Transverse colon (tissue), 4 donors: ENCODE measurements at regions of chr2 and their contacts with region 1.

Region 1: GRCh38 chr2:64348386-64349130 is 105.4 kb upstream of the LGALSL start:
- DNase-seq: no peak
- H3K4me3 ChIP-seq: no peak overlapping the region
- H3K27ac ChIP-seq: no peak overlapping the region
- H3K4me1 ChIP-seq: no peaks in the 10 kb centered on the region
- H3K27me3 ChIP-seq: no peaks in the 10 kb centered on the region
- CTCF ChIP-seq: no peak
- EP300 ChIP-seq: no peak
- POLR2A ChIP-seq: no peak

Region 2: DNA sequence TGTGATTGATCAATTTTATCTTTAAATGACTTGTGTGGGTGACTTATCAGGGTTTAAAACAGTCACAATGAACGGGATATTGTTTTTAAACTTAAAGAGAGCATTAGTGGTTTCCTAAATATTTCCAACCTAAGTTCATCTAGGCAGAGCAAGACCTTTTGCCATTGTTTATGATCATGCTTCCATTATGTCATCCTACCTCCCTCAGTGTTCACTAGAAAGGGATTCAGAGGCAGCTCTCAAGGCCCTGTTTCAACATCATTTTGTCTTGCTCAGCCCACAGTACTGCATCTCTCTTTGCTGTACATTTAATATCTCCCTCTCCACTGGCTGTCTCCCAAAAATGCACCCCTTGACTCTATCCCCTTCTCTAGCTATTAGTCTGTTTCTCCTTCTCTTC is 182.9 kb before region 1 on chr2:
- in situ Hi-C with region 1: no loop called
- intact Hi-C with region 1: no loop called
- DNase-seq: no peak
- H3K4me3 ChIP-seq: no peak overlapping the region
- H3K27ac ChIP-seq: no peak overlapping the region
- H3K4me1 ChIP-seq: peaks cover 0 to 2% (median 0%) of the 10 kb centered on the region in 4 donors
- H3K27me3 ChIP-seq: no peaks in the 10 kb centered on the region
- CTCF ChIP-seq: no peak
- EP300 ChIP-seq: no peak
- POLR2A ChIP-seq: no peak

Region 3: DNA sequence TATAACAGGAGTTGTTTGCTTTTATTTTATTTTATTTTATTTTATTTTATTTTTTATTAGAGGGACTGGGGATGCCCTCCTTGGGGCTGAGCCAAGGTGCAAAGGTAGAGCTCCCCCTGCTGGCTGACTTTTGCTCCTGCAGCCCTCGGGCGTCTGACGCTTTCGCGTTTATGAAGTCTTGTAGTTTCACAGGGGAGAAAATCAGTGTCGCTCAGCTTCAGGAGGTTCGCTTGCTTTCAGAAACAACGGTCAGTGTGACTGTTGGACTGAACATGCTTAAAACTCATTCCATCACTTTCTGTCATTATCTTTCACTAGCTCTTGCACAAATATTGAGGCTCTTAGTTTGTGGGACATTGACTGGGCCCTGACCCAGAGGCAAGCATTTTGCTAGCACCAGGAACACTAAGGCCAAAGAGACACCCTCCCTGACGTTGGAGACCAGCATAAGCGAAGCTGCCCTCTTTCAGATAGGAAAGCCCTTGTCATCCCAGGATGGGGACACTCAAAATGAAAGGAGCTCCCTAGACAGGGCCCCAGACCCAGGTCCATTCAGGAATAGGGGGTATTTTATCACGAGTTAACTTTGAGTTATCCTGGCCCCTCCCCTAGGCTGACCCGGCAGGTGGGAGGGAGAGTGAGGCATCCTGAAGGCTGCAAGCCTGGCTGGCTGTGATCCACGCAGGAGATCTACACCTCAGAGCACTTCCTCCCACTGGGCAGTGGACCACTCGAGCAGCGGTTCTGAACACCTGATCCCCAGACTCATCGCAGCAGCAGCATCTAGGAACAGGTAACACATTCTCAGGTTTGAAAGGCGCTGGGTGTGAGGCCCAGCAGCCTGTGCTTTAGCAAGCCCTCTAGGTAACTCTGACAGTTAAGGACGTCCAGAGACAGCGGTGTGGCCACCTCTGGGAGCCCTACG is 139.8 kb after region 1 on chr2:
- in situ Hi-C with region 1: loop called in 1 of 4 experiments (anchors 10 kb)
- intact Hi-C with region 1: no loop called
- DNase-seq: peak; percentile 78
- H3K4me3 ChIP-seq: no peak overlapping the region
- H3K27ac ChIP-seq: no peak overlapping the region
- H3K4me1 ChIP-seq: peaks cover 0 to 14% (median 5%) of the 10 kb centered on the region in 4 donors
- H3K27me3 ChIP-seq: no peaks in the 10 kb centered on the region
- CTCF ChIP-seq: peak; percentile 96 to 99 (median 98)
- EP300 ChIP-seq: no peak
- POLR2A ChIP-seq: no peak

Region 4: GRCh38 chr2:64873472-64873924 is 524.9 kb after region 1 on chr2:
- in situ Hi-C with region 1: loop called in 3 of 4 experiments (anchors 10 to 25 kb)
- intact Hi-C with region 1: no loop called
- DNase-seq: peak; percentile 84
- H3K4me3 ChIP-seq: peak overlapping the region in 1 of 4 donors; percentile 20
- H3K27ac ChIP-seq: no peak overlapping the region
- H3K4me1 ChIP-seq: peaks cover 0 to 15% (median 6%) of the 10 kb centered on the region in 4 donors
- H3K27me3 ChIP-seq: no peaks in the 10 kb centered on the region
- CTCF ChIP-seq: peak; percentile 92 to 97 (median 95)
- EP300 ChIP-seq: no peak
- POLR2A ChIP-seq: no peak